Left lung (tissue), 14 donors: ENCODE measurements at regions of chr21 and their contacts with region 1.

Region 1: DNA sequence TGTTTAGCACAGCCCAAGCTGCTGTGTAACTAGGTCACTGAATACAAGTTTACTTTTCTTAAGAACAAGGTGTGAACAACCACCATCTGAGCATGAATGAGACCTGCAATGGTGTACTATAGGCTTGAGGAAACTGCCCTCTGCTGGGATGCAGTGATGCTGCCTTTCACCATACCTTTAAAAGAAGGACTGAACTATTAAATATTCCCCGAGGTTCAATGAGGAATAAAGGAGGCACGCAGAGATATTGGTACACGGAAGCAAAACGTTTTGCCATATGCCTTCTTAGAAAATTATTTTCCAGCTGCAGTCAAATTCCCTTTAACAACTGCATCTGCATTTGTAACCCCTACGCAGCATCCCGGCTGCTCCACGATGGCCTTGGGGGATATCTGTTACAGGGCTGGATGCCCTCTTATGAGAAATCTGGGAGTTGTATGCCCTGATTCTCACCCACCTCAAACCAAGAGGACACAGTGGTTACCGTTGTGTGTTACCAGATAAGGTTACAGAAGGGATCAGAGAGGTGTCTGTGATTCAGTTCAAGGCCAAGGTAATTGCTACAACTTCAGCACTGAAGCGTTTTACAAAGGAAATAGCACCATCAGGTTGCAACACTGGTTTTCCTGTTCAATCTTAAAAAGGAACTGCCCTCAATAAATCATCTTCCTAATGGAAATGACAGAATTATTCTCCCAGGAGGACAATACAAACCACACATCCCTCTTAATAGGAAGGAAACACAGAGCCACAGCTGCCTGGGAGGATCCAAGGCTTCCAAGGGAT is 470.5 kb downstream of the LTN1 start:
- DNase-seq: peak in 1 of 4 donors; percentile 38
- ATAC-seq: peak; percentile 46
- H3K4me3 ChIP-seq: no peak overlapping the region
- H3K27ac ChIP-seq: no peak overlapping the region
- H3K4me1 ChIP-seq: peaks cover 0 to 12% of the 10 kb centered on the region in 2 donors
- H3K27me3 ChIP-seq: no peaks in the 10 kb centered on the region
- CTCF ChIP-seq: no peak

Region 2: DNA sequence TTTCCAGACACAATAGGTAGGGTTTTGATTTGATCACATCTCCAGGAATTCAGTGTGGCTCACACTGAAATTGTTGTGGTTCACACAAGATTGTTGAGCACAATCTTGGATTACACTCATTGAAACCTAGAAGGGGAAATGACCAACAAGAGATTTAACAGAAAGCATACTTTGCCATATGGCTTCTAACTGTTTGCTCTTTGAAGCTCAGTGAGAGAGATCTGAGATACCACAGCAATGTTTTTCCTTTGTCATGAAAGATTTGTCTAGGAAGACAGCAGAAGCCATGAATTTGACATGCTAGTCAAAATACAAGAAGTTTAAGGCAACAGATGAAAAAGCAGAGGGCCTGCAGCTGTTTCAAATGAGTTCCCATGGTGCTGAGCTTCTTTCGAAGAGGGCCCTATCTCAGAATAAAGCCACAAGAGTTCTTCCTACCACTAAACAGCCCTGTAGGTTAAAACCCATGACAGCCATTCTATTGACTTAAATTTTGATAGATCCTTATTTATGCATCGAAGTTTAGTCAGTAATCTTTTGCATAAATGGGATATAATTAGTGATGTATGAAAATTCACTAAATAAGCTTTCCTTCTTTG is 179.9 kb before region 1 on chr21:
- intact Hi-C with region 1: loop called in 1 of 2 experiments (anchors 10 kb)
- DNase-seq: no peak
- ATAC-seq: no peak
- H3K4me3 ChIP-seq: no peak overlapping the region
- H3K27ac ChIP-seq: no peak overlapping the region
- H3K4me1 ChIP-seq: peaks cover 0 to 7% of the 10 kb centered on the region in 2 donors
- H3K27me3 ChIP-seq: no peaks in the 10 kb centered on the region
- CTCF ChIP-seq: no peak

Region 3: DNA sequence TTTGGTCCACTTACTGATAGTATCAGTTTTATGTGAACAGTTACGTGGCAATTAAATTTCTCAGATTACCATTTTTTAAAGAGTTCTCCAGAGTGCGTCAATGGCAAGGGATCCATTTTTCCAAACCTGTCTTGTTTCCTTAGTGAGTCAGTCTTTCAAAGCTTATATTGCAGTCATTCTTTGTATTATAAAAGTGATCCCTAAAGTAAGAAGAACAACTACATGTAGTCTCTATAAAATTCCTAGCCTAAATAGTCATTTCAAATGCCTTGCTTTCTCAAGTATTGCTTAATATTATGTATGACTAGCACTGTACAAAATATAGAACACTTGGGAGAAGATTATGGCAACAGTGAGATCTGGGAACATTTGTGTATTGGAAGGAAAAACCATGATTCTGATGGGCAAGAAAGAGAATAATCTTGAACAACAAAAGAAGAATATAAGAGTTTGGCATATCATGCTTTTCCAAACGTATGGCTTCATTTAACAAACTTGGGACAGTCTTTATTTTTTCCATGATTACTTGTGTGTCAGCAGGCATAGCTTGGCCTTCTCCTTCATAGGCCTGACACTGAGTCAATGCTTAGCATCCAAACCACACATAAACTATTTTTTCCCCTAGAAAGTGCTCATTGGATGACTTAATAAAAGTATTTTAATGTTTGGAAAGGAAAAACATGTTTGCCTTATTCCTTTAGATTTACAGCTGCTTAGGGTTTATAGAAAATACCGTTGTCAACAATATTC is 77.0 kb before region 1 on chr21:
- intact Hi-C with region 1: no loop called
- DNase-seq: no peak
- ATAC-seq: no peak
- H3K4me3 ChIP-seq: no peak overlapping the region
- H3K27ac ChIP-seq: no peak overlapping the region
- H3K4me1 ChIP-seq: no peaks in the 10 kb centered on the region
- H3K27me3 ChIP-seq: no peaks in the 10 kb centered on the region
- CTCF ChIP-seq: no peak